HEK293 (cell line): ENCODE measurements at regions of chr15 and their contacts with region 1.

Region 1: GRCh38 chr15:50354838-50355618 is at the start of gene GABPB1:
- H3K4me3 ChIP-seq: peak within 1 kb of the TSS; percentile 77
- H3K27ac ChIP-seq: peak within 1 kb of the TSS; percentile 92
- H3K4me1 ChIP-seq: no peaks in the 10 kb centered on the region
- CTCF ChIP-seq: no peak

Region 2: GRCh38 chr15:50424066-50424890 is 69.2 kb after region 1 on chr15 and contains the start of gene USP8:
- CTCF ChIA-PET with region 1: no interaction called
- POLR2A ChIA-PET with region 1: interaction called, 16 read pairs
- H3K4me3 ChIP-seq: peak within 1 kb of the TSS; percentile 79
- H3K27ac ChIP-seq: peak within 1 kb of the TSS; percentile 67
- H3K4me1 ChIP-seq: peaks cover 3% of the 10 kb centered on the region; the same call in 1 of the 2 replicates
- CTCF ChIP-seq: no peak